HEK293 (cell line): ENCODE measurements at regions of chr17 and their contacts with region 1.

Region 1: DNA sequence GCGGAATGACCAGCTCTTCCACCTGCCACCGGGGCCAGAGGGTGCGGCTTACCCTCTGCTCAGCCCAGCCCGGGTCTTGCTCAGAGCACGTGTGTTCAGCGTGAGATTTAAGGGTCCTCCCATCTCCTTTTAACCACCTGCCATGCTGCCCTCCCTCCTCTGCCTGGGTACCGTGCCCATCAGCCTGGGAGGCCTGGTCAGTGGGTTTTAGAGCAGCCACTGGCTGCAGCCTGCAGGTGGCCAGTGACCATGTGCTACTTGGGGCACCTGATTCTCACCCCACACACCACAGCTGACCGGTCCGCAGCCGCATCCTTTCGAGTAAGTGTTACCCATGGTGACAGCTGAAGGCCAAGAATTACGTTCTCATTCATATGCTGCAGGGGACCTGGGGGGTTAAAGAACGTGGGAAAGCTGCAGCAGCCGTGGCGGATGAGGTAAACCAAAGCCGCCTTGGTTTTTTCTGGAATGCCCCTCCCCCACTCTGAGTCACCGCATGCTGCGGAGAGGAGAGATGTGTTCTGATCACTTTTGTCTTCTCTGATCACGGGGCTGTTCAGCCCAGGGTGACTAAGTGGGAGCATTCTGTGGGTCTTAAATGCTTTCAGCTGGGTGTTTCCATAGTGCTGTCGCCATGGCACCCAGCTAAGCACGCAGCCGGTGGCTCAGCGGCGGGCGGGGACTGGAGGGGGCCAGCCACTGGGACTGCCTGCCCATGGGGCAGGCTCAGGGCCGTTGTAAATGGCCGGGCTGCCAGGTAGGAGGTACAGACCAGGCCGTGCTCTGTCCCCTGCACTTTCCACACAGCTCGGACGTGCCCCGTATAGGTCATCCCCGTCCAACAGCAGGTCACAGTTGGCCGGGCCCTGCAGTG is 59.8 kb downstream of the BAIAP2 start:
- H3K4me3 ChIP-seq: no peak overlapping the region
- H3K27ac ChIP-seq: no peak overlapping the region; the same call in 1 of the 2 replicates
- H3K4me1 ChIP-seq: peaks cover 17% of the 10 kb centered on the region
- CTCF ChIP-seq: no peak

Region 2: GRCh38 chr17:81012573-81013447 is 81.9 kb before region 1 on chr17:
- CTCF ChIA-PET with region 1: interaction called, 14 read pairs
- POLR2A ChIA-PET with region 1: no interaction called
- H3K4me3 ChIP-seq: no peak overlapping the region
- H3K27ac ChIP-seq: no peak overlapping the region
- H3K4me1 ChIP-seq: no peaks in the 10 kb centered on the region
- CTCF ChIP-seq: no peak

Region 3: DNA sequence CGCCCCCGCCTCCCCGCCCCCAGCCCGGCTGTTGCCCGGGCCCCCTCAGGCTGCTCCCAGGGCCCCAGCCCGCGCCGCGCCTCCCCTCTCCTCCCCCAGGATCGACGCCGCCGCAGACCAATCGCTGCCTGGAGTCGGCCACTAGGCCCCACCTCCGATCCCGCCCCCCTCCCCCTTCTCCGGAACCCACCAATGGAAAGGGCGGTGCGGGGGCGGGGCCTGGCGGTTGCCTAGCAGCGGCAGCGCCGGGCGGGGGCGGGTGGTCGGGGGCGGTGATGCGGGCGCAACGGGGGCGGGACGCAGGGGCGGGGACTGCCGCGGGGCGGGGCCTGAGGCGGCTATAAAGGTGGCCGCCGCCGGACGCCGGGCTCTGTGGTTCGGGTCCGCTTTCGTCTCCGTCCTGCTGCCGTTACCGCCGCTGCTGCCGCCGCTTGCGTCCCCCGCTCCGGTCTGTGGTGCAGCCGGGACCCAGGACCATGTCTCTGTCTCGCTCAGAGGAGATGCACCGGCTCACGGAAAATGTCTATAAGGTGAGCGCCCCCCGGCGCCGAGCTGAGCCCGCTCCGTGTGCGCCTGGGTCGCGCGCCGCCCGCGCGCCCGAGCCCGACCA is 59.9 kb before region 1 on chr17 and contains the start of gene BAIAP2:
- CTCF ChIA-PET with region 1: interaction called, 32 read pairs
- POLR2A ChIA-PET with region 1: interaction called, 20 read pairs
- H3K4me3 ChIP-seq: peak within 1 kb of the TSS; percentile 75
- H3K27ac ChIP-seq: peak within 1 kb of the TSS; percentile 58; the same call in 1 of the 2 replicates
- H3K4me1 ChIP-seq: peaks cover 4% of the 10 kb centered on the region; the same call in 1 of the 2 replicates
- CTCF ChIP-seq: peak; percentile 47; the same call in 1 of the 2 replicates

Region 4: DNA sequence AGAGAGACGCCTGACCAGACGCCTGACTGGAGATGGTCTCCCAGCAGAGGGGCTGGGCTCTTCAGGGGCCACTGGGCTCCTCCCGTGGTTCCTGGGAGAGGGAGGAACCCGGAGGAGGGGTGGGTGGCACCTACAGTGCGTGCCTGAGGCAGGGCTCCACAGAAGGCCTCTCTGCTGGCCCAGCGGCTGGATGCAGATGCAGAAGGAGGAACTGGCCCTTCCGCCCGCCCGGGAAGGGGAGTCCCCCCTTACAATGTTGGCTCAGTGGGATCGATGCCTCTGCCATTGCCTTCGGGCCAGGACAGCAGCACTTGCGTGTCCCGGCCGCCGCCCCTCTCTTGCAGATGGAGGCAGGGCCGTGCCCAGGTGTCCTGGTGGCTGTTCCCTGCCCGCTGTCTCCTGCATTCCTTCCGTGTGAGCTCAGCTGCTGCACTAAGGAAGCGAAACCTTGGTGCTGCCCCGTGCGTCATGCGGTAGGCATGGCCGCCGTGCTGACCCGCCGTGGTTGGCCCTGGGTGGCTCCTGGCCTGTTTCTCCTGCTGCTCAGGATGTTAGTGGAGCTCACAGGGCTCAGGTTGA is 44.7 kb before region 1 on chr17:
- CTCF ChIA-PET with region 1: interaction called, 12 read pairs
- POLR2A ChIA-PET with region 1: interaction called, 11 read pairs
- H3K4me3 ChIP-seq: peak overlapping the region; percentile 6
- H3K27ac ChIP-seq: no peak overlapping the region
- H3K4me1 ChIP-seq: peaks cover 9% of the 10 kb centered on the region
- CTCF ChIP-seq: no peak

Region 5: GRCh38 chr17:81064678-81065475 is 29.9 kb before region 1 on chr17:
- CTCF ChIA-PET with region 1: interaction called, 10 read pairs
- POLR2A ChIA-PET with region 1: no interaction called
- H3K4me3 ChIP-seq: no peak overlapping the region
- H3K27ac ChIP-seq: no peak overlapping the region
- H3K4me1 ChIP-seq: no peaks in the 10 kb centered on the region
- CTCF ChIP-seq: no peak